ENCODE measurements at regions of chr18 and their contacts with region 1.

Region 1: DNA sequence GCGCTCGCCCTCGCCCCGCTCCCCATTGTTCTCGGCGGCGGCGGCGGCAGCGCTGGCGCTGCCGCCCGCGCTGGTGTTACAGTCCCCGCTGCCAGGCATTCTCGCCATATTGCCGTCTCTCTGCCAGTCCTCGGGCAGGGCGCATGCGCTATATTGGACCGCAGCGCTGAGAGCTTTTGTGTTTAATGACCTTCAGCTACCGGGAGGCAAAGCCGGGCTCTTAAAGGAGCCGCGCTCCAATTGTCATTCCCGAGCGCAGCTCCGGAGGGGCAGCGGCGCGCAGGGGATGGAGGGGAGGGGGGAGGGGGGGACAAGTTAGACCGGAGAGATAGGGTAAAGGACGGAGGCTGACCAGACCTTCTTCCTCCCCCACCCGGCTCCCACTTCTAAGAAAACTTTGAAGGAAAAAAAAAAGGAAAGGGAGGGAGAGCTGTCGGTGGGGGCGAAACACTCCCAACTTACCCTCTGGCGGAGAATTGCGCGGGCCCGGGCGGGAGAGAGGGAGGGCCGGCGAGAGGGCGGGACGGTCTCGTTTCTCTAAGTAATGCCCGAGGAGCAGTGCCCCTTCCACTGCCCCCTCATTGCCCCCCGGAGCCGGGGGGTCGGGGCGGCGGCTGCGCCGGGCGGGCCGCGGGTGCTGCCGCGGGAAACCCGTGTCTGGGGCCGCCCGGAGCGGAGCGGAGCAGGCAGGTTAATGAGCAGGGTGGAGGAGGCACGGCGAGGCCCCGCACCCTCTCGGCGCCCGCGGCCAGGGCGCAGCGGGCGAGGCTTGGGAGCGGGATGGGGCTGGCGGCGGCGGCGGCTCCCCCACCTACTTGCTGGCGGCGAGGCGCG is at the start of gene KCTD1:
- DNase-seq: peak; percentile 89
- H3K4me3 ChIP-seq: peak within 1 kb of the TSS; percentile 72
- H3K27ac ChIP-seq: no peak within 1 kb of the TSS
- H3K4me1 ChIP-seq: peaks cover 7% of the 10 kb centered on the region
- H3K27me3 ChIP-seq: peaks cover 76% of the 10 kb centered on the region
- CTCF ChIP-seq: no peak
- total RNA-seq, gene KCTD1: 4.1 and 5.7 TPM in 2 replicates

Region 2: DNA sequence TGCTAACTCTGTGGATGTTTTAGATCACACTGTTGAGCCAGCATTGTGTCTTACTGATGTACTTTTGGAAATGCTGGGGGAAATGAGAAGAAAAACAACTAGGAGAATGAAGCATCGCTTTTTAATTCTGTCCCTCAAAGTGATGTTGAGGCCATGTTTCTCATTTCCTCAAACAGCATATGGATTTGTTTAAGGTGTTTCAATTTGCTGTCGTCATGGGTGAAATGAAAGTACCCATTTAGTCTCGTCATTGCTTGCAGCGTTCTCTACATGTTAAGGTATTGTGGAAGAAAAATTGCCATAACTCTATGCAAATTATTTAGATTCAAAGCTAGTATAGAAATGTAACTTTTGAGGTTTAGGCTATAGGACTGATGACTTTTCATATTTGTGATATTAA is 151.6 kb before region 1 on chr18:
- CTCF ChIA-PET with region 1: no interaction called
- POLR2A ChIA-PET with region 1: no interaction called
- intact Hi-C with region 1: no loop called
- DNase-seq: no peak
- H3K4me3 ChIP-seq: no peak overlapping the region
- H3K27ac ChIP-seq: no peak overlapping the region
- H3K4me1 ChIP-seq: no peaks in the 10 kb centered on the region
- H3K27me3 ChIP-seq: no peaks in the 10 kb centered on the region
- CTCF ChIP-seq: no peak

Region 3: DNA sequence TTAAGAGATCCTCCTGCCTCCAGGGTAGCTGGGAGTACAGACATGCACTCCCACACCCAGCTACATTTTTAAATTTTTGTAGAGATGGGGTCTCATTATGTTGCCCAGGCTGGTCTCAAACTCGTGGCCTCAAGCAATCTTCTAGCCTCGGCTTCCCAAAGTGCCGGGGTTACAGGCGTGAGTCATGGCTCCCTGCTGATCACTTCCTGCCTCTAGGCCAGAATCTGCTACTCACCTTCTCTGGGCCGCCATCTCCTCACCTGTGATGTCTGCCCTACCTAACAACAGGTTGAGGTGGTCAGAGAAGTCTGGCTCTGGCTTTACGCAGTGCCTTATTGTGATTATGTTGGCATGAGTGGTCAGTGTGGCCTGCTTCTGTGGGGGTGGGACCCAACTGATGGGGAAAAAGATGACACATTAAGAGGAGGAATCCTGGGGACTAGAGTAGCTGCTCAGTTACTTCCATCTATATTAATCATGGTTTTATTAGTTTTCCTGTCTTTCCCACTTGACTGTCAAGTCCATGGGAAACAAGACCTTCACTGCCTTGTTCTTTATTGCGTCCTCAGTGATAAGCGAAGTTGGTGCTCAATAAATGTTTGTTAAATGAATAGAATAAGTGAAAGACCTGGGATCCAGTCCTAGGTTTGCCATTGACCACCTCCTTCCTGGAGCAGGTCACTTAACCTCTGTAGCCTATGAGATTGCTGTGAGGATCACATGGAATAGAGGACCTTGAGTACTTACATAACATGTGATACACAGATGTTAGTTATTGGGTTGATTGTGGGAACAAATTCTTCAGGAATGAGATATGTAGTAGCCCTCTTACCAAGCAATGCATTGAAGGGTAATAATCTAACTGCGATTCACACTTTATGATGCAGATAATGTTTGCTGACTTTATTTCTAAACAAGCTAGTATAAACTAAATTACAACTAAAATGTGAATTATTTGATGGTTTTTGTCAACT is 16.0 kb before region 1 on chr18:
- CTCF ChIA-PET with region 1: no interaction called
- POLR2A ChIA-PET with region 1: interaction called, 19 read pairs
- intact Hi-C with region 1: no loop called
- DNase-seq: no peak
- H3K4me3 ChIP-seq: no peak overlapping the region
- H3K27ac ChIP-seq: no peak overlapping the region
- H3K4me1 ChIP-seq: no peaks in the 10 kb centered on the region
- H3K27me3 ChIP-seq: no peaks in the 10 kb centered on the region
- CTCF ChIP-seq: no peak